Adrenal gland (tissue), 19 donors: ENCODE measurements at regions of chr1 and their contacts with region 1.

Region 1: GRCh38 chr1:153827168-153827964 is 52.2 kb downstream of the SLC27A3 start:
- DNase-seq: no peak
- H3K4me3 ChIP-seq: no peak overlapping the region
- H3K27ac ChIP-seq: no peak overlapping the region
- H3K4me1 ChIP-seq: no peaks in the 10 kb centered on the region
- H3K27me3 ChIP-seq: no peaks in the 10 kb centered on the region
- CTCF ChIP-seq: no peak
- POLR2A ChIP-seq: no peak

Region 2: GRCh38 chr1:153922972-153923925 is 95.9 kb after region 1 on chr1 and contains the start of gene GATAD2B:
- intact Hi-C with region 1: loop called in 1 of 2 experiments (anchors 5 kb)
- DNase-seq: peak; percentile 100
- H3K4me3 ChIP-seq: peak within 1 kb of the TSS in 3 of 4 donors; percentile 42 to 93 (median 69)
- H3K27ac ChIP-seq: peak within 1 kb of the TSS in 4 of 5 donors; percentile 67 to 92 (median 80)
- H3K4me1 ChIP-seq: peaks cover 23 to 34% of the 10 kb centered on the region in 2 donors
- H3K27me3 ChIP-seq: no peaks in the 10 kb centered on the region
- CTCF ChIP-seq: no peak
- POLR2A ChIP-seq: no peak
- total RNA-seq, gene GATAD2B: 6.4 to 43.3 (median 18.0) TPM

Region 3: GRCh38 chr1:154014154-154014910 is 187.0 kb after region 1 on chr1:
- intact Hi-C with region 1: no loop called
- DNase-seq: peak in 4 of 7 donors; percentile 30 to 61 (median 43)
- H3K4me3 ChIP-seq: no peak overlapping the region
- H3K27ac ChIP-seq: no peak overlapping the region
- H3K4me1 ChIP-seq: no peaks in the 10 kb centered on the region
- H3K27me3 ChIP-seq: no peaks in the 10 kb centered on the region
- CTCF ChIP-seq: peak in 3 of 6 experiments; percentile 8 to 22 (median 16)
- POLR2A ChIP-seq: no peak